ENCODE measurements at regions of chr4 and their contacts with region 1.

Region 1: GRCh38 chr4:170259631-170260153 is 169.9 kb upstream of the AADAT start:
- DNase-seq: peak; percentile 93
- H3K4me3 ChIP-seq: no peak overlapping the region
- H3K4me1 ChIP-seq: no peaks in the 10 kb centered on the region
- H3K27me3 ChIP-seq: peaks cover 5% of the 10 kb centered on the region; the same call in 1 of the 2 replicates

Region 2: DNA sequence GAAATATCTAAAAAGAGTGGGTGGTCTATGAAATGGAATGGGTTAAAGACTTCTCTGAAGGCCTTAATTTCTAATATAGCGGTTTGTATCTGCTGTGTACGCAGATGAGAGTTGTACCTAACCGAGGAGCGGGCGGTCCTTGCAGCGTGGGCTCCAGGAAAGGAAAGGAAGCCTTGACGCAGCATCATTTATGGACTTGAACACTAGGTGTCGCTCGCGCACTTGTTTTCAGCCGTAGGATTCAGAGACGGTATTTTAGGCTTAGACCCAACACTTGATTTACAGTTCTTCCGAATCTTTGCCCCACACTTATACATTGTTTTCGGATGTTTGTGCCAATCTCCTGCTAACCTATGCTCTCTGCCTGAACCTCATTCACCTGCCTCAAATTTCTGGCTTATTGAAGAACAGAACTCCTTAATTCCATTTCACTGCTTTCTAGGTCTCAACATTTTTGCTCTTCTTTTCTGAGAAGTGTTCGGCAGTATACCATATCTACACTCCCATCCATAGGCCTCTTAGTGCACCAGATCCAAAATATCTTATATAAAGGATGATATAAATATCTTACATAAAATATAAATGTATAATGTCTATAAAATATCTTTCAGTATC is 121.0 kb before region 1 on chr4:
- in situ Hi-C with region 1: loop called (anchors 10 kb)
- DNase-seq: peak; percentile 65 to 85
- H3K4me3 ChIP-seq: no peak overlapping the region
- H3K4me1 ChIP-seq: no peaks in the 10 kb centered on the region
- H3K27me3 ChIP-seq: peaks cover 3% of the 10 kb centered on the region; the same call in 1 of the 2 replicates